Mammary epithelial cell (primary cell): ENCODE measurements at regions of chr11 and their contacts with region 1.

Region 1: DNA sequence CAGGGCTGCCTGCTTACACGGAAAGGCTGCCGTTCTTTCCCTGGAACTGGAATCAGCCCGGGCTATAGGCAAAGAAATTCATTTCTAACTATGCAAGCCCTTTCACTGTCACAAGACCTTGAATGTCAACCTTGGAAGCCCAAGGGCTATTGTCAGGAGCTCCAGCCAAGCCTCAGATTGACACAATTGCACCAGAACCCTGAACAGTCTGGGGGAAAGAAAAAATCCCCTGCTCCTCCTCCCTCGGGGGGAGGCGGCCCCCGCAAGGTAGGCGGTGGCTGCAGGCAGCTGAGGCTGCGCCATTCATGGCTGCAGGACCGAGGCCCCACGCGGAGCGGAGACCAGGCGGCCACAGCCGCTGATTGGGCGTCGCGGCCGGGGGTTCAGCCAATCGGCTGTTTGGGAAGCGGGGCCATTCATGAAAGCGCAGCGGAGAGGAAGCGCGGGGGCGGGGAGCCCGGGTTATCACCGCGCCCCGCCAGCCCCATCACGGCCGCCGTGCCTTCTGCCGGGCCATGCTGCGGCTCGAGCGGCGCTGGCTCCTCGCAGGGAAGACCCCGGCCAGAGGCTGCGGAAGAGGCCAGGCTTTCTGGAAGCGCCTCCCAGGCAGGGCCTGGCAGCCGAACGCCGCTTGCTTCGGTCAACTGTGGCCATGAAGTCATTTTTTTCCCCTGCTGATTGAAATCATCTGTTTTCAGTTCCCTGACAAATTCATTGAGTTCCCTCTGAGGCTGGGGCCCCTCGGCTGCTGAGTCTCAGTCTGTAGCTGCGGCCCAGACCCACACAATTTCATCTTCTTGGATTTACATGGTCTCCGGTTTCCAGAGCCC is 38.1 kb upstream of the LINC01488 start:
- DNase-seq: peak; percentile 87
- H3K4me3 ChIP-seq: peak overlapping the region in 2 of 3 experiments; percentile 32 to 40
- H3K27ac ChIP-seq: peak overlapping the region; percentile 39
- H3K4me1 ChIP-seq: peaks cover 43% of the 10 kb centered on the region
- H3K27me3 ChIP-seq: no peaks in the 10 kb centered on the region
- CTCF ChIP-seq: no peak

Region 2: DNA sequence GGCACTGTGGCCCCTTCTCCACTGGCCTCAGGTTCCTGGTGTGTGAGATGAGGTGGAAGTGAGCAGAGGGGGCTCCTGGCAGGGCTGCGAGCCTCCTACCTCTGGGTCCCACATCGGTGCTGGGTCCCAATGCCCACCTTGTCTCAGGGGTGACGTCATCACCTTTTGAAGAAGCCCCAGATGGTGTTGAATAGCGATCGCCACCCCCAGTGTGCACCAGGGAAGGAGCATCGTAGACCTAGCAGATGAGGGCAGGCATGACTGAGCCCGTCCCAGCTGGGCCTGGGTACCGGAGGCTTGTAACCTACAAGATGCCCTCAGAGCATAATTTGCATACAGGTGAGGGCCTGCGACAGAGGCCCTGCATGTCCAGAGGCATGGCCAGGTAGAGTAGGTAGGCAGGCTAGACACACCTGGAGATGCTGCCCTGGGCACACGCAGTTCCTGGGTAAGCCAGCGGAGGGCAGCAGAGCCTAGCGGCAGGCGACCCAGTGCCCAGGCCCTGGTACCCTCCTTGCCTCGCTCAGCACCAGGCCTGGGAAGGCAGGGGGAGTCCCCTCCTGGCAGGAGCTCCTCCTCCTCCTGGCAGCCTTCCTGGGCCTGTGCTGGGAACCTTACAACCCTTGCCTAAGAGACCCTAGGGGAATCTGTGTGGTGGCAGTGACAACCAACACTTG is 342.1 kb before region 1 on chr11:
- CTCF ChIA-PET with region 1: no interaction called
- dilution Hi-C with region 1: no loop called
- in situ Hi-C with region 1: loop called in 1 of 2 experiments (anchors 25 kb)
- intact Hi-C with region 1: loop called (anchors 5 kb)
- DNase-seq: peak; percentile 74
- H3K4me3 ChIP-seq: no peak overlapping the region
- H3K27ac ChIP-seq: no peak overlapping the region
- H3K4me1 ChIP-seq: peaks cover 3% of the 10 kb centered on the region
- H3K27me3 ChIP-seq: no peaks in the 10 kb centered on the region
- CTCF ChIP-seq: peak; percentile 97 to 100

Region 3: GRCh38 chr11:69382131-69383128 is 60.9 kb before region 1 on chr11:
- CTCF ChIA-PET with region 1: no interaction called
- dilution Hi-C with region 1: loop called (anchors 5 kb)
- in situ Hi-C with region 1: no loop called
- intact Hi-C with region 1: no loop called
- DNase-seq: no peak
- H3K4me3 ChIP-seq: no peak overlapping the region
- H3K27ac ChIP-seq: no peak overlapping the region
- H3K4me1 ChIP-seq: peaks cover 8% of the 10 kb centered on the region
- H3K27me3 ChIP-seq: no peaks in the 10 kb centered on the region
- CTCF ChIP-seq: no peak

Region 4: DNA sequence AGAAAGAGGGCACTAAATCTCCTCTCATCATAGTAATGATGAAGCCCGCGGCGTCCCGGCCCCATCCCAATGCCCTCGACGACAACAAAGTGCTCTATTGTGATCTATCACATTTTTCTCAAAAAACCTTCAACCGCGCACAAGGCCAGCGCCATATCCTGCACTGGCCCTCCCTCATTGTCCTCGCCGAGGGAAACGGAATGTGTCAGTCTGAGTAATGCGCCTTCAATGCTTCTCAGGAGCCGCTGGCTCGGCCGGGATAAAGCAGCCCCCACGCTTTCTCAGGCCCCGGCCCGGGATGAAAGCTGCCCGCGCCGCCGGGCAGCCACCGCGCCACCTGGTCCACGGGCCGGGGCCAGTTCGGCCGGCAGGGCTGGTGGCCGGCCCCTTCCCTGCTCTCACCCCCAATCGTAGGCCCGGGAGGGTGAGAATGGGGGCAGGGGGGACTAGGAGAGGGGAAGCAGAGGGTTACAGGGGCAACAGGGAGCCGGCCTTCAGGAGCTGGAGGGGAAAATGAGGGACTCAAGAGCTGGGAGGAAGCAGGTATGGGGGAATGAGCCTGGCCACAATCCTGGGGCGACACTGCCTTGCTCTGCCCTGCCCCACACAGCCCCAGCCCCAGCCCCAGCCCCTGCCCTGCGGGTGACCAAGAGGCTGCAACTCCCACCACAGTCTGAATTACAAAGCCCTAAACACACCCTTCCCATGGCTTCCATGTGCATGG is 28.1 kb after region 1 on chr11:
- CTCF ChIA-PET with region 1: no interaction called
- dilution Hi-C with region 1: no loop called
- in situ Hi-C with region 1: no loop called
- intact Hi-C with region 1: no loop called
- DNase-seq: no peak
- H3K4me3 ChIP-seq: no peak overlapping the region
- H3K27ac ChIP-seq: no peak overlapping the region
- H3K4me1 ChIP-seq: no peaks in the 10 kb centered on the region
- H3K27me3 ChIP-seq: no peaks in the 10 kb centered on the region
- CTCF ChIP-seq: no peak

Region 5: DNA sequence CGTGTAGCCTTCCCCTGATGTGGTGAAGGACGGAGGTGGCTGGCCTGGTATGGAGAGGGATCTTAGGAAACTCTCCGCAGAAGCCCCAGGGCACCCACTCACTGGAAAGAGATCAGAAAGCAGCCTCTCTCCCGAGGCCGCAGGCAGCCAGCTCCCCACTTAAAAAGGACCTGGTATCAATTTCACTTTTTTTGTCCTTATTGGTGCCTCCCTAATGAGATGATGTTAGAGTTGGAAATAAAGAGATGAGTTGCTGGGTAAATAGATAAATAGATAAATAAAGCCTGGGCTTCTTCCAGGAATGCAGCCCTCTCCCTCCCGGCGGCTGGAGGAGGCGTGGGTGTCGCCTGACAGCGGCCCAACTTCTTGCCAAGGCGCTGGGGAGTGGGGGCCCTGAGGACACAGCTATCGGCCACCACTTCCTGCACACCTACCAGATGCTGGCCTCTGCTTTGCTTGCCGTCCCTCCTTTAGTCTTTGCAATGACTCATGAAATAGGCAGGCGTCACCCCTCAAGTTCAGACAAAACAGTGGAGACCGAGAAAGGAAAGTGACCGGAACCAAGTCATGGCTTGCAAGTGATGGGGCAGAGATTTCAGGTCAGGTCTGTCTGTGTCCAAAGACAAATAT is 81.0 kb after region 1 on chr11:
- CTCF ChIA-PET with region 1: no interaction called
- dilution Hi-C with region 1: loop called (anchors 5 kb)
- in situ Hi-C with region 1: no loop called
- intact Hi-C with region 1: loop called (anchors 5 kb)
- DNase-seq: peak; percentile 78
- H3K4me3 ChIP-seq: peak overlapping the region in 1 of 3 experiments; percentile 15
- H3K27ac ChIP-seq: peak overlapping the region; percentile 28
- H3K4me1 ChIP-seq: peaks cover 22% of the 10 kb centered on the region
- H3K27me3 ChIP-seq: no peaks in the 10 kb centered on the region
- CTCF ChIP-seq: no peak

Region 6: GRCh38 chr11:69654569-69655327 is 211.4 kb after region 1 on chr11:
- CTCF ChIA-PET with region 1: no interaction called
- dilution Hi-C with region 1: loop called (anchors 5 kb)
- in situ Hi-C with region 1: loop called in 1 of 2 experiments (anchors 25 kb)
- intact Hi-C with region 1: no loop called
- DNase-seq: no peak
- H3K4me3 ChIP-seq: no peak overlapping the region
- H3K27ac ChIP-seq: no peak overlapping the region
- H3K4me1 ChIP-seq: no peaks in the 10 kb centered on the region
- H3K27me3 ChIP-seq: no peaks in the 10 kb centered on the region
- CTCF ChIP-seq: no peak